ENCODE measurements at regions of chr7 and their contacts with region 1.

Region 1: GRCh38 chr7:83655951-83656556 is 7.1 kb upstream of the SEMA3E start:
- DNase-seq: no peak
- ATAC-seq: no peak

Region 2: DNA sequence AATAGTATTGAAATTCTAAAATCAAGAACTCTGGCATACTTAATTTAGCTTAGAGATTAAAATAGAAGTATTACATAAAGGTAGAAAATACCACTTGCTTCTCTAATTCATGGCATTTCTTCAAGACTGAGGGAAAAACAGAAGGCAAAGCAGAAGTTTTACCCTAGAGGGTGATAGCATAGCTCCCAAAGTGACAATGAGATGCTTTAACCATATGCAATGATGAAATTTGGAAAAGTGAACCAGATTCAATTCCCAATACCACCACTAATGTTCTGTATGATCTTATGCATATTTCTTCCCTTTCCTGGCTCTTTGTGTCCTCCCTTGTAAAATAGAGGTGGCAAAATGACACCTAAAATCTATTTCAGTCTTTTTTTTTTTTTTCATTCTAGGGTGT is 267.6 kb before region 1 on chr7:
- intact Hi-C with region 1: no loop called
- DNase-seq: no peak
- ATAC-seq: no peak

Region 3: DNA sequence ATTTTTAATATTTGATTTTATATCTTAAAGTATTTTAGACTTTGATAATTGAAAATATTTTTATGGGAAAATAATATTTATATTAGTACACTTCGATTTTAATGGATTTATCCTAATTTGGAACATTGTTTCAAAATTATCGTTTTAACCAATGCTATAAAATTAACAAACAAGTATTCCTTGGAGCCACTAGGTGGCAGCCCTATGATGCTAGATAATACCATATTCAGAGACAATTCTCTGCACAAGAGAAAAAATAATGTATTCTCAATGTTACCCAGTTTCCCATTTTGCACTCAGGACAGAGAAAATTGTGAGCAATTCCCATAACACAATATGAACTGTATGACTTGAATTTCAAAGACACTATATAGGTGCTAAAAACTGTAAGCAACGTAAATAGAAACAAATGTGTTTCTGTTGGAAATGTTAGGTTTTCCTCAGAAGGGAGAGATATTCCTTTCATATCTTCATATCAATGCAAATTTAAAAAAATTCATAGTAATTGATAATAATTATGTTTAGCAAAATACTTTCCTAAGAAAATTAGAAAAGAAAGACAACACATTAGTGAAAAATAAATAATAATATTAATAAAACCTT is 245.0 kb before region 1 on chr7:
- intact Hi-C with region 1: loop called (anchors 5 kb)
- DNase-seq: no peak
- ATAC-seq: no peak